Activated CD4-positive, alpha-beta memory T cell treated with anti-CD3 and anti-CD28 coated beads for 36 hours (primary cell): ENCODE measurements at regions of chr4 and their contacts with region 1.

Region 1: DNA sequence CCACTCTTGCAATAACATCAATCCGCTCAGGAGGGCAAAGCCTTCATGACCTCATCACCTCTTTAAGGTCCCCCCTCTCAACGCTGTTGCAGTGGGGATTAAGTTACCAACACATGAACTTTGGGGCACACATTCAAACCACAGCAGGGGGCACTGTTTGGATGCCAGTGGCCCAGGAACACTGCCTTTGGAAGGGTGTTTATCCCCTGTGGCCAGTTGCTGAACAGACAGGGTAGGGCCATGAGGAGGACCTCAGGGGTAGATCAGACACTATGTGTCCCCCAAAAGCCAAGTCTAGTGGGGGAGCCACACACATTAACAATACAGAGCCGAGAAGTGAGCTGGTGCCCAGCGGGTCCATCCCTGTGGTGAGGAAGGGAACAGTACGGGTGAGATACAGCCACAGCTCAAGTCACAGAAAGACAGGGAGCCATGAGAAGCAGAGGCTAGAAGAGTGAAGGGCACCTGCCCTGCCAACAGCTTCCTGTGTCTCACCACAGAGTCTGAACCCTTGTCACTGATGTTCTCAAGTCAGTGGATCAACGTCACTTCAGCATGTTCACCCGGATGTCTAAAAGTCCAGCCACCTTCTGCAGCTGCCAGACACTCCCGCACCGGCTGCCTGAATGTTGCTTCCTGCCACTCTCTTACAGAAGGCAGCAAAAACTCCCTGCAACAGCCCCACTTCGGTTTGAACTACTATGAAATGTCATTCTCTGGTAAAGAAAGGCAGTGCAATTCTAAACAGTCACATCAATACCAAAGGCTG is 19.9 kb upstream of the MXD4 start:
- DNase-seq: peak; percentile 88
- H3K4me3 Mint-ChIP-seq: peak overlapping the region; percentile 20
- H3K27ac Mint-ChIP-seq: peak overlapping the region; percentile 88
- H3K4me1 Mint-ChIP-seq: peaks cover 31% of the 10 kb centered on the region
- H3K27me3 Mint-ChIP-seq: no peaks in the 10 kb centered on the region

Region 2: GRCh38 chr4:2262143-2262943 is 19.4 kb before region 1 on chr4:
- CTCF ChIA-PET with region 1: no interaction called
- POLR2A ChIA-PET with region 1: interaction called, 4 read pairs
- intact Hi-C with region 1: loop called (anchors 1 kb)
- DNase-seq: peak; percentile 99
- H3K4me3 Mint-ChIP-seq: peak overlapping the region; percentile 62
- H3K27ac Mint-ChIP-seq: peak overlapping the region; percentile 54
- H3K4me1 Mint-ChIP-seq: peaks cover 3% of the 10 kb centered on the region
- H3K27me3 Mint-ChIP-seq: no peaks in the 10 kb centered on the region

Region 3: GRCh38 chr4:2364654-2365053 is 82.9 kb after region 1 on chr4:
- CTCF ChIA-PET with region 1: no interaction called
- POLR2A ChIA-PET with region 1: no interaction called
- intact Hi-C with region 1: loop called (anchors 5 kb)
- DNase-seq: peak; percentile 79
- H3K4me3 Mint-ChIP-seq: peak overlapping the region; percentile 64
- H3K27ac Mint-ChIP-seq: no peak overlapping the region
- H3K4me1 Mint-ChIP-seq: peaks cover 9% of the 10 kb centered on the region
- H3K27me3 Mint-ChIP-seq: no peaks in the 10 kb centered on the region